Gastrocnemius medialis (tissue), 4 donors: ENCODE measurements at regions of chr20 and their contacts with region 1.

Region 1: DNA sequence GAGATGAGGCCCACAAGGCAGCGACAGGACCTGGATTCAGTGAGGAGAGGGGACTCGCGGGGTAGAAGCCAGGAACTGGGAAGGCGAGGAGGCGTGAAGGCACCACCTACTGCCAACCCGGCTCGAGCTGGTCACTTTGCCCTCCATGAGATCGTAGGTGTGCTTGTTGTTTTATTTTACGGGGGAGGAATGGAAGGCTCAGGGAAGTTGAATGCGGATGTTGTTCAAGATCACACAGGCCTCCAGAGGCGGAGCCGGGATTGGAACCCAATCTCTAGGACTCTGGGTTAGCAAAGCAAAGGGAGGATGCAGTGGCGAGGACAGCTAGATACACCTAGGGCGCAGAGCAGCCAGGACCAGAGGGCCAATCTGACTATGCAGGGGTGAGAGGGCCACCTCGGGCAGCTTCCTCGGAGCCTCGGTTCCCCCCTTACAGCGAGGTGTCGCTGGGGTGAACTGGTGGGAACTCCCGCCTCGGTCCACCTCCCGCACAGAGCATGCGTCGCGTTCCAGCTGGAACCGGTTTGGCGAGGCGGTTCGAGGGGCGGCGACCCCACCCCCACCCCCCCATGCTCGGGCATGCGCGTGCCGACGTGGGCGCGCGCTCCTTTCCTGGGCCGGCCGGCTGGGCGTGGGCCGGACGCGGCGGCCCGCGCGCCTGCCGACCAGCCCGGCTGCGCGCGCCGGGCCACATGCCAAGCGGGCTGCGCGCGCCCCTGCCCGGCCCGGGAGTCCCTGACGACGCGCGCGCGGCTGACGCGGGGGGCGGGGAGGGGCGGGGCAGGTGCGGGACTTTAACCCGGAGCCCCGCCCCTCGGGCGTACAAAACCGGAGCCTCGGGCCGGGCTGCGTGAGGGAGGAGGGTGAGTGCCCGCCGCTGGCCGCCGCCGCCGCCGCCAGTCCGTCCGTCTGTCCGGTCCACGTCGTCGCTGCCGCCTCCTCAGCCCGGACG is 80.4 kb upstream of the MYL9 start:
- DNase-seq: peak; percentile 88 to 95
- ATAC-seq: peak; percentile 61 to 64
- H3K4me3 ChIP-seq: peak overlapping the region; percentile 55 to 83 (median 59)
- H3K27ac ChIP-seq: peak overlapping the region; percentile 99 to 100 (median 100)
- H3K4me1 ChIP-seq: peaks cover 33 to 35% of the 10 kb centered on the region in 2 donors
- H3K27me3 ChIP-seq: no peaks in the 10 kb centered on the region
- CTCF ChIP-seq: no peak
- POLR2A ChIP-seq: peak; percentile 99

Region 2: DNA sequence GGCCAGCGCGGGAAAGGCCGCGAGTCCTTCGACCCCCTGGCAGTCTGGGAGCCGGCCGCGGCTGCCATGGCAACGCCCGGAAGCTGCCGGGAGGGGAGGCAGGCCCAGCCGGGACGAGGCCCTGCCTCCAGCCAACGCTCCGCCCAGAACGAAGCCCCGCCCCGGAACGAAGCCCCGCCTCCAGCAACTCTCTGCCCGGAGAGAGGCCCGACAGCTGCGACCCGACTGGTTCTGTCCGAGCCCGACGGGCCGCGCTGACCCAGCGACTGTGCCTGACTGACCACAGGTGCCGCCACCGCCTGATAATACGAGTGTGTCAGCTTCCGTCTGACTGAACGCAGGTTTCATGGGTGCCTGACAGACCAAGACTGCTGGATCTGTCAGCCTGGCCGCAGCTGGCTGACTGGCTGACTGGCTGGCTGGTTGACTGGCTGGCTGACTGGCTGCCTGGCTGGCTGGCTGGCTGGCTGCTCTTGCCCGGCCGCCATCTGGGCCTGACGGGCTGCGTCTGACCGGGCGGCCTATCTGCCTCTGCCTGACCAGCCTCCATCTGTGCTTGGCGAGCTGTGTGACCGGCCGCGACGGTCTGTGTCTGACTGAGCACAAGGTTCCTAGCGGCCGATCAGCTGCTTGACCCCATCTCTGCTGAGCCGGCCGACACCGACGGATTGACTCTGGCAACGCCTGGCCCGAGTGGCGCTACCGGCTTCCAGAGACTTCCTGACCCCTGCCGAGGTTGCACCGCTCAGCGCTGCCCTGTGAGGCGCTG is 396.1 kb before region 1 on chr20:
- in situ Hi-C with region 1: no loop called
- intact Hi-C with region 1: loop called (anchors 2 kb)
- DNase-seq: peak; percentile 87 to 93
- ATAC-seq: peak; percentile 95 to 97
- H3K4me3 ChIP-seq: peak overlapping the region; percentile 65 to 95 (median 68)
- H3K27ac ChIP-seq: peak overlapping the region; percentile 89 to 91 (median 91)
- H3K4me1 ChIP-seq: no peaks in the 10 kb centered on the region
- H3K27me3 ChIP-seq: no peaks in the 10 kb centered on the region
- CTCF ChIP-seq: peak in 1 of 5 experiments; percentile 16
- POLR2A ChIP-seq: peak; percentile 75 to 87

Region 3: GRCh38 chr20:36481381-36482043 is 20.6 kb after region 1 on chr20:
- in situ Hi-C with region 1: no loop called
- intact Hi-C with region 1: loop called (anchors 1 kb)
- DNase-seq: peak in 1 of 2 donors; percentile 82
- ATAC-seq: peak; percentile 23 to 48
- H3K4me3 ChIP-seq: no peak overlapping the region
- H3K27ac ChIP-seq: peak overlapping the region; percentile 89 to 96 (median 94)
- H3K4me1 ChIP-seq: peaks cover 93 to 98% of the 10 kb centered on the region in 2 donors
- H3K27me3 ChIP-seq: no peaks in the 10 kb centered on the region
- CTCF ChIP-seq: peak in 3 of 5 experiments; percentile 22 to 37 (median 28)
- POLR2A ChIP-seq: no peak

Region 4: GRCh38 chr20:36541764-36542561 is 81.0 kb after region 1 on chr20:
- in situ Hi-C with region 1: no loop called
- intact Hi-C with region 1: loop called (anchors 2 kb)
- DNase-seq: no peak
- ATAC-seq: peak in 1 of 2 donors; percentile 28
- H3K4me3 ChIP-seq: peak overlapping the region; percentile 50 to 70 (median 66)
- H3K27ac ChIP-seq: peak overlapping the region; percentile 71 to 92 (median 88)
- H3K4me1 ChIP-seq: peaks cover 9 to 14% of the 10 kb centered on the region in 2 donors
- H3K27me3 ChIP-seq: peaks cover 0 to 6% (median 4%) of the 10 kb centered on the region in 3 donors
- CTCF ChIP-seq: peak; percentile 21 to 54 (median 43)
- POLR2A ChIP-seq: peak in 1 of 2 donors; percentile 8

Region 5: GRCh38 chr20:36745927-36746659 is 285.2 kb after region 1 on chr20 and contains the start of gene NDRG3:
- in situ Hi-C with region 1: no loop called
- intact Hi-C with region 1: loop called (anchors 10 kb)
- DNase-seq: peak; percentile 92 to 95
- ATAC-seq: peak; percentile 80 to 90
- H3K4me3 ChIP-seq: peak within 1 kb of the TSS; percentile 79 to 94 (median 88)
- H3K27ac ChIP-seq: peak within 1 kb of the TSS; percentile 88 to 95 (median 92)
- H3K4me1 ChIP-seq: peaks cover 18 to 32% of the 10 kb centered on the region in 2 donors
- H3K27me3 ChIP-seq: no peaks in the 10 kb centered on the region
- CTCF ChIP-seq: peak in 2 of 5 experiments; percentile 5 to 8
- POLR2A ChIP-seq: peak; percentile 29 to 68
- total RNA-seq, gene NDRG3: 6.7 to 24.9 (median 13.2) TPM